BJ (cell line): ENCODE measurements at regions of chr1 and their contacts with region 1.

Region 1: GRCh38 chr1:28642847-28643635 is at the start of gene TAF12:
- DNase-seq: peak; percentile 85
- H3K4me3 ChIP-seq: peak within 1 kb of the TSS; percentile 71
- H3K27me3 ChIP-seq: no peaks in the 10 kb centered on the region
- CTCF ChIP-seq: peak; percentile 36
- polyA plus RNA-seq, gene TAF12: 31.8 and 46.8 TPM in 2 replicates

Region 2: DNA sequence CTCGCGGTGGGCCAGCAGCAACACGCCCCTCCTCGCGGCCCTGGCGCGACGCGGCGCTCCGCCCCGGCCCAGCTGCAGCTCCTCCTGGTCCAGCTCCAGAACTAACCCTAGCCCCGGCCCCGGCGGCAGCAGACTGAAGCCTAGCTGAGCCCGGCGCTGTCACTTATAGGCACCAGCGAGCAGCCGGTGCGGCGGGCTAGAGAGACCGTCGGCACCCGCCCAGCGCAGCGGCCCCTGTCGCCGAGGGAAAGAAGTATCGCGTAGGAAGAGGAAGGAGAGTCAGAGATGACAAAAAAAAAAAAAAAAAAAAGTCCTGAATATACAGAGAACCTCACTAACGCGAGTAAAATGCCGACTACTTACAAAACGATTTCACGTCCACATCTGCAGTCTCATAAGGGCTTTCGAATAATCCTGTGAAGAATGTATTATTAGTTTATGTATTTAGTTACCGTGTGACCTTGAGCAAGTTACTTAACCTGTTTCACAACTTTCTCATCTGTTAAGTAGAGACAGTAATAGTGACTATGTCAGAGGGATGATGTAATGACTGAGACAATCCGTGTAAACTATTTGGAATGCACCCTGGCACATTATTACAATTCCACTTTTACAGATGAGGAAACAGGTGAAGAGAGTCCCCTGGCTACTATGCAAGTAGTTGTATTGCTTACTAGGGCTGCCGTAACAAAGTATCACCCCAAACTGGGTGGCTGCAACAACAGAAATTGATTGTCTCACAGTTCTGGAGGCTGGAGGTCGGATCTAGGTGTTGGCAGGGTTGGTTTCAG is 1487.9 kb before region 1 on chr1 and contains the start of gene SLC9A1:
- CTCF ChIA-PET with region 1: no interaction called
- POLR2A ChIA-PET with region 1: interaction called, 10 read pairs
- DNase-seq: peak; percentile 80
- H3K4me3 ChIP-seq: peak within 1 kb of the TSS; percentile 66
- H3K27me3 ChIP-seq: no peaks in the 10 kb centered on the region
- CTCF ChIP-seq: peak; percentile 93
- polyA plus RNA-seq, gene SLC9A1: 12.3 and 18.9 TPM in 2 replicates

Region 3: GRCh38 chr1:28380394-28380793 is 262.6 kb before region 1 on chr1:
- CTCF ChIA-PET with region 1: no interaction called
- POLR2A ChIA-PET with region 1: no interaction called
- DNase-seq: no peak
- H3K4me3 ChIP-seq: no peak overlapping the region
- H3K27me3 ChIP-seq: no peaks in the 10 kb centered on the region
- CTCF ChIP-seq: no peak

Region 4: DNA sequence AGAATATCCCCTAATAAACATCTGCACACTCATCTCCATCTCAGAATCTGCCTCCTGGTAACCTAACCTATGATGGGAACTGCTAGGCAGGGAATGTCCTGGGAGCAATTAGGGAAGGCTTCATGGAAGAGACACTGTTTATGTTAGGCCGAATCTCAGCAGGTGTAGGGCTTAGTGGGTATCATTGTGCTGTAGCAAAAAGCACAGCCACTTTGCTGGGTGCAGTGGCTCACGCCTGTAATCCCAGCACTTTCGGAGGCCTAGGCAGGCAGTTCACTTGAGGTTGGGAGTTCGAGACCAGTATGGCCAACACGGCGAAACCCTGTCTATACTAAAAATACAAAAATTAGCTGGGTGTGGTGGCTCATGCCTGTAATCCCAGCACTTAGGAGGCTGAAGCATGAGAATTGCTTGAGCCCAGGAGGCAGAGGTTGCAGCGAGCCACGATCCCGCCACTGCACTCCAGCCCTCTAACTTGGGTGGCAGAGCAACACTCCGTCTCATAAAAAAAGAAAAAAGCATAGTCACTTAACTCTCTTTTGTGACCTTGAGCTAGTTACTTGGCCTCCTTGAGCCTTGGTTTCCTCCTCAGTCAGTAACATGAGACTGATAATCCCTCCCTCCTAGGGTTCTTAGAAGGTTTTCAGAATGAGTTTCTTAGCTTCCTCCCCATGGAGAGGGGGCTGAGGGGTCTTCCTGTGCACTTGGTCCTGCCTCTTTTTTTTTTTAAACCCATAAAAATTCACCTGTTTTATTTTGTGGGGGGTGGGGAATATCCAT is 47.4 kb before region 1 on chr1:
- CTCF ChIA-PET with region 1: no interaction called
- POLR2A ChIA-PET with region 1: interaction called, 25 read pairs
- DNase-seq: no peak
- H3K4me3 ChIP-seq: no peak overlapping the region
- H3K27me3 ChIP-seq: no peaks in the 10 kb centered on the region
- CTCF ChIP-seq: no peak

Region 5: DNA sequence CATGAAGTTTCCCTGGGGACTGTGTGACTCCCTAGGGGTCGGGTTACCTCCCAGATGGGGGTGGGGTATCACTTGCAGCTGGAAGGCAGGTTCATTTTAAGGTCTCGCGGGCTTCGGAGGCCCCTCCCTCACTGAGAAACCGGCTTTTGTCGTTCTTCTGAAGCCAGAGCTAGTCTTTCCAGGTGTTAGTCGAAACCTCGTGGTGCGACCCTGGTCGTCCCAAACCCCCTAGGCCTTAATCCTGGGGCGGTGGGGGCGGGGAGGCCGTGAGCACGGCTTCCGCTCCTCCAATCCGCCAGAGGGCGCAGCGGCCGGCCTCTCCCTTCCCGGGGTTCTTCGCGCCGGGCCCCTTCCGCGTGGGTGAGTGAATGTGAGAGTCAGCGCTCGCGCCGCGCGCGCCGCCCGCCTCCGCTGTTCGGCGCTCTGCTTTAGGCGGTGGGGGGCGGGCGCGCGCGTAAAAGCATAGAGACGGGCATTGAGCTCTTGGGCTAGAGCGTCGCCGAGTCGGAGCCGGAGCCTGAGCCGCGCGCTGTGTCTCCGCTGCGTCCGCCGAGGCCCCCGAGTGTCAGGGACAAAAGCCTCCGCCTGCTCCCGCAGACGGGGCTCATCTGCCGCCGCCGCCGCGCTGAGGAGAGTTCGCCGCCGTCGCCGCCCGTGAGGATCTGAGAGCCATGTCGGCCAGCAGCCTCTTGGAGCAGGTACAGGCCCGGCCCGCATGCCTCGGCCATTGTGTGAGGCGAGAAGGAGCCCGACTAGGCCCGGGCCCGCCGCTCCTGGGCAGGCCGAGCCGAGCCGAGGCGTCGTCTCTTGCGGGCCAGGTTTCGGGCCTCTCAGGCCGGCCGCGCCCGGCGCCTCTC is 93.6 kb after region 1 on chr1 and contains the start of gene YTHDF2:
- CTCF ChIA-PET with region 1: interaction called, 5 read pairs
- POLR2A ChIA-PET with region 1: interaction called, 18 read pairs
- DNase-seq: peak; percentile 67
- H3K4me3 ChIP-seq: peak within 1 kb of the TSS; percentile 91
- H3K27me3 ChIP-seq: no peaks in the 10 kb centered on the region
- CTCF ChIP-seq: peak; percentile 92
- polyA plus RNA-seq, gene YTHDF2: 45.9 and 68.2 TPM in 2 replicates